Panc1 (cell line): ENCODE measurements at regions of chr14 and their contacts with region 1.

Region 1: DNA sequence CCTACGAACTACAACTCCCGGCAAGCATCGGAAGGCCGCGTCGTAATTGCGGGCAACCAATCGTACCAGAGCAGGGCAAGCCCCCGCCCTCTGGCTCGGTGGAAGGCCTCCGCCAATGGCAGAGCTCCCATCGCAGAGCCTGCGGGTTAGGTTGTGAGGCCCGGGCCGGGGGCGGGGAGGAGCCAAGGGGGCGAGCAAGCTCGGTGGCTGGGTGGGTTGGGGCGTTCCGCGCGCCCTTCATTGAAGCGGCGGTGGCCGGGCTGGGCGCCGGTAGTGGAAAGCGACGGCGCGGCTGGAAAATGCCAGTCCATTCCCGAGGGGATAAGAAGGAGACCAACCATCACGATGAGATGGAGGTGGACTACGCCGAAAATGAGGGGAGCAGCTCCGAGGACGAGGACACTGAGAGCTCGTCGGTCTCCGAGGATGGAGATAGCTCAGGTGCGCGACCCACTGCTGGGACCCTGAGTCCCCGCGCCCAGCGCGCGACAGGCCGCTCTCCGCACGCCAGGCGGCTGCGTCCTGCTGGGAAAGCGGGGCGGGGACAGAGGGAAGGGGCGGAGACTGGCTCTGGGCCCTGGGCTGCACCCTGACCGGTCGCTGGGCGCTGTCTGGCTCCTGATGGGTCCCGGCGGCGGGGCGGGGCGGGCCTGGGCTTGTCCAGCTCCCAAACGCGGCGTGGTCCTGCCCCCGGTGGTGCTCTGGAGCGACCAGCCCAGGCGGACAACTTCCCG is at the start of gene BRMS1L:
- DNase-seq: peak; percentile 93
- ATAC-seq: peak; percentile 98
- H3K4me3 ChIP-seq: peak within 1 kb of the TSS; percentile 63 to 91
- H3K27ac ChIP-seq: peak within 1 kb of the TSS; percentile 79
- H3K4me1 ChIP-seq: peaks cover 7% of the 10 kb centered on the region
- H3K27me3 ChIP-seq: no peaks in the 10 kb centered on the region
- CTCF ChIP-seq: no peak
- total RNA-seq, gene BRMS1L: 10.5 TPM

Region 2: GRCh38 chr14:35653045-35653444 is 173.3 kb before region 1 on chr14:
- CTCF ChIA-PET with region 1: no interaction called
- POLR2A ChIA-PET with region 1: interaction called, 10 read pairs
- in situ Hi-C with region 1: no loop called
- intact Hi-C with region 1: no loop called
- DNase-seq: no peak
- ATAC-seq: no peak
- H3K4me3 ChIP-seq: no peak overlapping the region
- H3K27ac ChIP-seq: no peak overlapping the region
- H3K4me1 ChIP-seq: no peaks in the 10 kb centered on the region
- H3K27me3 ChIP-seq: no peaks in the 10 kb centered on the region
- CTCF ChIP-seq: no peak

Region 3: DNA sequence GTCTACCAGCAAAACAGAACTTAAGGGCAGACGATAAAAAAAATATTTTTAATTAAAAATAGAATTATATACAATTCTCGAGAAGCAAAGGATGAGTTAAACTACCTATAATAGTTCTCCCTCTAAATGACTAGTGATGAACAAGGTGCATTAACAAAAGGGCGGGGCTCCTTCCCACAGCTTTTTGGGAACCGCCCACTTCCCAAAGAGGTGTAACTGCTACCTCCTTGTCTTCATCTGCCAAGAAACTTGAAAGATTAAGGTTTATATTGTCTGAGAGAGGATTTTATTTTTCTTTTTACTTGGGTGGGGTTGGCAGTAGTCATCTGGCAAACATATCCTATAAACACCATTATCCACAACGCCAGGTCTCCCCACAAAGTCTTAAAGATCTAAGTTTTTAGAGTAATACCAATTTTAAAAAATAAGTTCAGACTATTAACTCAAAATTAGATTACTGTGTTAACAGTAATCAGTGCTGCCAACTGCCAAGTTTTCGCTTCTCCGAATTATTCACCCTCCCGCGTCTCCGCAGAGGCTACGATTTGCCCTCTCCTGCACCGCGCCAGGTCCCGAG is 18.2 kb before region 1 on chr14:
- CTCF ChIA-PET with region 1: no interaction called
- POLR2A ChIA-PET with region 1: no interaction called
- in situ Hi-C with region 1: no loop called
- intact Hi-C with region 1: no loop called
- DNase-seq: no peak
- ATAC-seq: no peak
- H3K4me3 ChIP-seq: peak overlapping the region; percentile 79 to 80
- H3K27ac ChIP-seq: peak overlapping the region; percentile 77
- H3K4me1 ChIP-seq: peaks cover 11% of the 10 kb centered on the region
- H3K27me3 ChIP-seq: no peaks in the 10 kb centered on the region; the same call in 1 of the 2 replicates
- CTCF ChIP-seq: no peak

Region 4: GRCh38 chr14:35847636-35848035 is 21.3 kb after region 1 on chr14:
- CTCF ChIA-PET with region 1: no interaction called
- POLR2A ChIA-PET with region 1: interaction called, 16 read pairs
- in situ Hi-C with region 1: no loop called
- intact Hi-C with region 1: no loop called
- DNase-seq: no peak
- ATAC-seq: no peak
- H3K4me3 ChIP-seq: no peak overlapping the region
- H3K27ac ChIP-seq: no peak overlapping the region
- H3K4me1 ChIP-seq: no peaks in the 10 kb centered on the region
- H3K27me3 ChIP-seq: no peaks in the 10 kb centered on the region
- CTCF ChIP-seq: no peak

Region 5: DNA sequence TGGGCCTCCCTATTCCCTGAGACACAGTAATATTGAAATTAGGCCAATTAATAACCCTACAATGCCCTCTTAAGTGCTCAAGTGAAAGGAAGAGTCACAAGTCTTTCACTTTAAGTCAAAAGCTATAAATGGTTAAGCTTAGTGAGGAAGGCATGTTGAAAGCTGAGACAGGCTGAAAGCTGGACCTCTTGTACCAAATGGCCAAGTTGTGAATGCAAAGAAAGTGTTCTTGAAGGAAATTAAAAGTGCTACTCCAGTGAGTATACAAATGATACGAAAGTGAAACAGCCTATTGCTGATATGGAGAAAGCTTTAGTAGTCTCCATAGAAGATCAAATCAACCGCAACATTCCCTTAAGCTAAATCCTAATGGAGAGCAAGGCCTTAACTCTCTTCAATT is 209.3 kb after region 1 on chr14:
- CTCF ChIA-PET with region 1: no interaction called
- POLR2A ChIA-PET with region 1: no interaction called
- in situ Hi-C with region 1: no loop called
- intact Hi-C with region 1: no loop called
- DNase-seq: no peak
- ATAC-seq: no peak
- H3K4me3 ChIP-seq: no peak overlapping the region
- H3K27ac ChIP-seq: no peak overlapping the region
- H3K4me1 ChIP-seq: no peaks in the 10 kb centered on the region
- H3K27me3 ChIP-seq: no peaks in the 10 kb centered on the region
- CTCF ChIP-seq: no peak